H1 (cell line): ENCODE measurements at regions of chr19 and their contacts with region 1.

Region 1: DNA sequence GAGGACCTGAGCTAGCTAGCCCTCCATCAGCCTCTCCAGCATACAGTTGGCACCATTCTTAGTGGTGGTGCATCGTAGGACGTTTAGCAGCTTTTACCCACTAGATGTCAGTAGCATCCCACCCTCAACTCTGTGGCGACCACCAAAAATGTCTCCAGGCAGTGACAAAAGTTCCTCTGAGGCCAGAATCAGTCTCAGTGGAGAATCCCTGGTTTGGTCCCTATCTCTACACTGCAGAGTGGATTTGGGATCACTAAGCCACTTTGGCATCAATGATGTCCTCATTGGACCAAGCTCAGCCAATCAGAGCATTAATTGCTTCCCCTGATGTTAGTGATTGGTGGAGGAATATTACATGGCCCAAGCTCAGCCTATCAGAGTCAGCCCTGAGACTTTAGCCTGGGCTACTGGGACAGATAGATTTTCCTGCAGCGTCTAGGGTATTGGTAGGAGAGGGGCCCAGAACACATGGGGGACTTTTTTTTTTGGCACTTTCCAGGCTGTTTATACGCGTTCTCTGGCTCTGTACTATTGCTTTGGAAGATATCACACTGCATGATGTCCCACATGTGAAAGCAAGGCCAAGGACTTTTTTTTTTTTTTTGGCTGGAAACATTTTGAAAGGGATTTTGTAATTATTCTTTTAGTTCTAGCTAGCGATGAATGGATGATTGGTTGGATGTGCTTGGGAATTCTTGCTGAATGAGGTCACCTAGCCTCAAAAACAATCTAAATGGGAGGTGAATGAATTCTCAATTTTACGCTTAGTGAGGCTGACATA is 7.0 kb downstream of the TMEM221 start:
- DNase-seq: peak in 1 of 2 experiments; percentile 59
- H3K4me3 ChIP-seq: no peak overlapping the region
- H3K27ac ChIP-seq: no peak overlapping the region
- H3K4me1 ChIP-seq: no peaks in the 10 kb centered on the region
- H3K27me3 ChIP-seq: no peaks in the 10 kb centered on the region; a peak in 1 of 7 replicates
- CTCF ChIP-seq: peak; percentile 58 to 83 (median 73)
- EP300 ChIP-seq: no peak
- POLR2A ChIP-seq: no peak
- RAD21 ChIP-seq: peak; percentile 84

Region 2: GRCh38 chr19:17419621-17420466 is 21.6 kb before region 1 on chr19 and contains the start of gene MVB12A:
- CTCF ChIA-PET with region 1: interaction called, 16 read pairs
- POLR2A ChIA-PET with region 1: interaction called, 5 read pairs
- DNase-seq: peak; percentile 90 to 99
- H3K4me3 ChIP-seq: peak within 1 kb of the TSS; percentile 57 to 88 (median 78)
- H3K27ac ChIP-seq: peak within 1 kb of the TSS; percentile 62; the same call in 1 of the 2 replicates
- H3K4me1 ChIP-seq: peaks cover 3 to 15% (median 9%) of the 10 kb centered on the region in 4 experiments
- H3K27me3 ChIP-seq: peaks cover 0 to 3% (median 0%) of the 10 kb centered on the region in 4 experiments; a peak in 2 of 7 replicates
- CTCF ChIP-seq: no peak
- EP300 ChIP-seq: peak in 1 of 2 experiments; percentile 6; a peak in 1 of 3 replicates
- POLR2A ChIP-seq: 0 out of 3 replicates have a peak, but pooled peaks of 1 of the 2 experiments have one; percentile 49
- RAD21 ChIP-seq: no peak
- total RNA-seq, gene MVB12A: 36.8 and 37.9 TPM in 2 replicates

Region 3: GRCh38 chr19:17424743-17425365 is 16.6 kb before region 1 on chr19:
- CTCF ChIA-PET with region 1: interaction called, 40 read pairs
- POLR2A ChIA-PET with region 1: interaction called, 5 read pairs
- DNase-seq: peak in 1 of 2 experiments; percentile 91
- H3K4me3 ChIP-seq: peak overlapping the region; percentile 9 to 63 (median 34); a peak in 5 of 8 replicates
- H3K27ac ChIP-seq: no peak overlapping the region
- H3K4me1 ChIP-seq: peaks cover 0 to 12% (median 6%) of the 10 kb centered on the region in 4 experiments; a peak in 6 of 7 replicates
- H3K27me3 ChIP-seq: no peaks in the 10 kb centered on the region; a peak in 2 of 7 replicates
- CTCF ChIP-seq: peak; percentile 81 to 90 (median 81)
- EP300 ChIP-seq: no peak
- POLR2A ChIP-seq: no peak
- RAD21 ChIP-seq: peak; percentile 62 to 75

Region 4: DNA sequence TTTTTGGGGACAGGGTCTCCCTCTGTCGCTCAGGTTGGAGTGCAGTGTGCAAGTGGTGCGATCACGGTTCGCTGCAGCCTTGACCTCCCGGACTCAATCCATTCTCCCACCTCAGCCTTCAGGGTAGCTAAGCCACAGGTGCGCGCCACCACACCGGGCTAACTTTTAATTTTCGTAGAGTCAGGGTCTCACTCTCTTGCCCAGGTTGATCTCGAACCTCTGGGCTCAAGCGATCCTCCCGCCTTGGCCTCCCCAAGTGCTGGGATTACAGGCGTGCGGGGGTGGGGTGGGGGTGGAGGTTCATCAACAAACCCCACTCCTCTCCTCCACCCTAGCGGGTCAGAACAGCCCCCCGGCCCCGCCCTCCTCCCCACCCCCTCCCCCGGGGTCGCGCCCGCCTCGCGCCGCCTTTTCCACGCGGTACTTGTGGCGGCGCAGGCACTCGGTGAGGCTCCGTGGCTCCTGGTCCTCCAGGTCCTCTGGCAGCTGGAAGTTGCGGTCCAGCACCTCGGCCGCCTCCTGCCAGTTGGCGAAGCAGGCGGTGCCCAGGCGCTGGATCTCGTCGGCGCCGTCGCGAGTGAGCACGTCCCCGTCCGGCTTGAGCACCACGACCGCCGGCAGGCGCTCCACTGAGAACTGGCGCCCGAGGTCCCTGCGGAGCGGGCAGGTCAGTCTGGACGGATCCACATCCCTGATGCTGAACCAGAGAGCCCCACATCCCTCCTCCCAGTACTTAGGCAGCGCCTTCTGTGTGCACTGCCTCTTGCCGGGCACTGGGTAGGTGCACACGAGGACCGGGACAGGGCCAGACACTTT is 14.1 kb after region 1 on chr19:
- CTCF ChIA-PET with region 1: interaction called, 13 read pairs
- POLR2A ChIA-PET with region 1: no interaction called
- DNase-seq: peak in 1 of 2 experiments; percentile 67
- H3K4me3 ChIP-seq: peak overlapping the region in 2 of 4 experiments; percentile 9 to 38; a peak in 3 of 8 replicates
- H3K27ac ChIP-seq: no peak overlapping the region
- H3K4me1 ChIP-seq: peaks cover 0 to 9% (median 4%) of the 10 kb centered on the region in 4 experiments; a peak in 5 of 7 replicates
- H3K27me3 ChIP-seq: peaks cover 6 to 27% (median 22%) of the 10 kb centered on the region in 4 experiments
- CTCF ChIP-seq: no peak
- EP300 ChIP-seq: no peak
- POLR2A ChIP-seq: no peak
- RAD21 ChIP-seq: no peak

Region 5: GRCh38 chr19:17470068-17470841 is 28.8 kb after region 1 on chr19 and contains the start of gene SLC27A1:
- CTCF ChIA-PET with region 1: interaction called, 26 read pairs
- POLR2A ChIA-PET with region 1: interaction called, 6 read pairs
- DNase-seq: peak; percentile 96 to 97
- H3K4me3 ChIP-seq: peak within 1 kb of the TSS; percentile 70 to 84 (median 79)
- H3K27ac ChIP-seq: no peak within 1 kb of the TSS
- H3K4me1 ChIP-seq: peaks cover 0 to 20% (median 8%) of the 10 kb centered on the region in 4 experiments; a peak in 5 of 7 replicates
- H3K27me3 ChIP-seq: peaks cover 0 to 11% (median 5%) of the 10 kb centered on the region in 4 experiments; a peak in 3 of 7 replicates
- CTCF ChIP-seq: no peak
- EP300 ChIP-seq: no peak
- POLR2A ChIP-seq: peak in 1 of 2 experiments; percentile 54; a peak in 1 of 3 replicates
- RAD21 ChIP-seq: no peak
- total RNA-seq, gene SLC27A1: 7.3 and 7.5 TPM in 2 replicates

Region 6: GRCh38 chr19:17488593-17489391 is 47.4 kb after region 1 on chr19:
- CTCF ChIA-PET with region 1: no interaction called
- POLR2A ChIA-PET with region 1: no interaction called
- DNase-seq: peak; percentile 96 to 97
- H3K4me3 ChIP-seq: peak overlapping the region; percentile 14 to 65 (median 50); a peak in 7 of 8 replicates
- H3K27ac ChIP-seq: no peak overlapping the region
- H3K4me1 ChIP-seq: peaks cover 0 to 19% (median 15%) of the 10 kb centered on the region in 4 experiments; a peak in 6 of 7 replicates
- H3K27me3 ChIP-seq: no peaks in the 10 kb centered on the region
- CTCF ChIP-seq: peak; percentile 71 to 86 (median 84)
- EP300 ChIP-seq: no peak
- POLR2A ChIP-seq: peak; percentile 29 to 71; a peak in 2 of 3 replicates
- RAD21 ChIP-seq: peak; percentile 48 to 58

Region 7: DNA sequence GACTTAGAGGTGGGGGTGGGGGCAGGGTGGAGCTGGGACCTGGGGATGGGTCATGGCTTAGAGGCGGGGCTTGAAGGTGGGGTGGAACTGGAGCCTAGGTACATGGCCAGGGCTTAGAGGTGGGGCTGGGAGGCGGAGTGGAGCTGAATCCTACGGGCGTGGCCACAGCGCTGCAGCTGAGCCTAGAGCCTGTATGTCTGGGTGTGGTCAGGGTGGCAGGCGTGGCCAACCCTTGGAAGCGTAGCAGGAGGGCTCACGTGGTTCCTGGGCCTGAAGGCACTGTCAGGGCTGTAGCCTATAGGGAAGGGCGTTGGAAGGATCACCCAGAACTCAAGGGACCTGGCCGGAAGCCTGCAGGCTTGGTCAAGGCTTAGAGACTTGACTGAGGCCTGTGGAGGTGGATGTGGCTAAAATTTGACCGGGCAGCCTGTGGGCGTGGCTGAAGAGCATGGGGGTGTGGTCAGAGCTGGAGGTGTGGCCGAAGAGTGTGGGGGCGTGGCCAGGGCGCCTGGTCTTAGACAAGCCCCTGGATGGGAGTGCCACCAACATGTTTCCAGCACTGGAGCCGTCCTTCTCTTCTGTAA is 138.3 kb after region 1 on chr19:
- CTCF ChIA-PET with region 1: interaction called, 11 read pairs
- POLR2A ChIA-PET with region 1: no interaction called
- DNase-seq: peak; percentile 87 to 95
- H3K4me3 ChIP-seq: peak overlapping the region; percentile 23 to 46 (median 36); a peak in 5 of 8 replicates
- H3K27ac ChIP-seq: 0 out of 2 replicates have a peak overlapping the region, but pooled peaks have one; percentile 13
- H3K4me1 ChIP-seq: peaks cover 0 to 18% (median 14%) of the 10 kb centered on the region in 4 experiments; a peak in 6 of 7 replicates
- H3K27me3 ChIP-seq: no peaks in the 10 kb centered on the region
- CTCF ChIP-seq: no peak
- EP300 ChIP-seq: no peak
- POLR2A ChIP-seq: no peak; a peak in 1 of 3 replicates
- RAD21 ChIP-seq: no peak